Endothelial cell of umbilical vein (primary cell): ENCODE measurements at regions of chr14 and their contacts with region 1.

Region 1: GRCh38 chr14:84254290-84254689 is 1275.7 kb upstream of the FLRT2 start:
- DNase-seq: peak; percentile 96
- H3K4me3 ChIP-seq: peak overlapping the region in 1 of 3 experiments; percentile 32
- H3K27ac ChIP-seq: peak overlapping the region; percentile 87
- H3K4me1 ChIP-seq: peaks cover 55% of the 10 kb centered on the region
- H3K27me3 ChIP-seq: no peaks in the 10 kb centered on the region
- CTCF ChIP-seq: no peak
- POLR2A ChIP-seq: peak; percentile 58

Region 2: DNA sequence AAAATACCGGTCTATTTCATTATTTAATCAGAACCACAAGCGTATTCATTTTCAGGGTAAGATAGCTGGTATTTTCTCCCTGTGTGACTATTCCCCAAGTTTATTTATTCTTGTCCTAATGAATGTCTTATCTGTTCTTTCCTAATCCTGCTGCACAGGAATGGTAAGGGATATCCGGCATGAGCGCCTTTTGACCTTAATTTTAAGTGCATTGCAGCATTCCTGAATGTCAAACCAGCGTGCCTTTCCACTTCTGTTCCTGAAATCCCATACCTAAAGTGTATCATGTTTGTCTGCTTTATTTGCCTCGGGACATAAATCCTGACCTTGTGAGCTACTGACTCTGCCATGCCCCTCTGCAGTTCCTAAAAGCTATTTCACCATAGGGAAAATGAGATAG is 437.5 kb before region 1 on chr14:
- CTCF ChIA-PET with region 1: no interaction called
- POLR2A ChIA-PET with region 1: no interaction called
- dilution Hi-C with region 1: no loop called
- intact Hi-C with region 1: loop called (anchors 1 kb)
- DNase-seq: peak; percentile 87
- H3K4me3 ChIP-seq: peak overlapping the region in 1 of 3 experiments; percentile 35
- H3K27ac ChIP-seq: peak overlapping the region; percentile 37
- H3K4me1 ChIP-seq: peaks cover 21% of the 10 kb centered on the region
- H3K27me3 ChIP-seq: no peaks in the 10 kb centered on the region
- CTCF ChIP-seq: no peak
- POLR2A ChIP-seq: peak; percentile 57

Region 3: DNA sequence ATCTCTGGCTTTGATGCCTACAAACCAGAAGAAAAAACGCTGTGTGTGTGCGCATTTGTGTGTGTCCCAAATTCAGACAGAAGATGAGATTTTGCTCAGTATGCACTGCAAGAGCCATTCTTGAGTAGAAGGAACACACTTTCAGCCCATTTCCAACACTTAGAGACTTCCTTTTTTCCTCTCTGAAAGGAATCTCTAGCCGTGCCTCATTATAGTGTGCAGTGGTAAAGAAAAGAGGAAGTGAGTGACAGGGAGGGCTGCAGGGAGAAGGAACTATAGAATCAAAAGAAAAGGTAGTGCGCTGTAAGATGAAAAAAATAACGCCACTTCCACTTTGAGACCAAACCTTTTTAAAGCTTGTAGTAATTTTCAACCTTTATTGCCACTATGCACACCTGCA is 125.3 kb before region 1 on chr14:
- CTCF ChIA-PET with region 1: no interaction called
- POLR2A ChIA-PET with region 1: no interaction called
- dilution Hi-C with region 1: no loop called
- intact Hi-C with region 1: loop called (anchors 5 kb)
- DNase-seq: peak; percentile 31
- H3K4me3 ChIP-seq: no peak overlapping the region
- H3K27ac ChIP-seq: no peak overlapping the region
- H3K4me1 ChIP-seq: peaks cover 21% of the 10 kb centered on the region
- H3K27me3 ChIP-seq: no peaks in the 10 kb centered on the region
- CTCF ChIP-seq: no peak
- POLR2A ChIP-seq: no peak

Region 4: DNA sequence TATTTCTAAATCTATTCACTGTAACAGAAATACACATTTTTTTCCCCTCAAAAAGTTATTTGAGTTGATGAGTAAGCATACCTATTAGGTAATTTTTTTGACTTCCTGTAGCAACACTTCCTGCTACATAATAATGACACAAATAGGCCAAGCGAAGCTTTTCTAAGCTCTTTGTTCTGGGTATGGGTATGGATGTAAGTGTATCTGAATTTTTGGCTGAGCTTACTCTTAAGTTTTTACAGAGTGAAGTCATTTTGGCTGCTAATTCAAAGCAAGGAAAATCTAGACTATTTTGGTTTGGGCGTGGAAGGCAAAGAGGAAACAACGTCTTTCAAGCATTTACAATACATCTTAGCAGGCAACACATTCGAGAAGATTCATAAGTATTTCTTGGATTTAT is 69.7 kb after region 1 on chr14:
- CTCF ChIA-PET with region 1: no interaction called
- POLR2A ChIA-PET with region 1: interaction called, 3 read pairs
- dilution Hi-C with region 1: no loop called
- intact Hi-C with region 1: loop called (anchors 1 kb)
- DNase-seq: peak; percentile 57
- H3K4me3 ChIP-seq: no peak overlapping the region
- H3K27ac ChIP-seq: peak overlapping the region; percentile 64
- H3K4me1 ChIP-seq: peaks cover 16% of the 10 kb centered on the region
- H3K27me3 ChIP-seq: no peaks in the 10 kb centered on the region
- CTCF ChIP-seq: no peak
- POLR2A ChIP-seq: no peak

Region 5: GRCh38 chr14:84622357-84622756 is 368.1 kb after region 1 on chr14:
- CTCF ChIA-PET with region 1: no interaction called
- POLR2A ChIA-PET with region 1: no interaction called
- dilution Hi-C with region 1: no loop called
- intact Hi-C with region 1: loop called (anchors 5 kb)
- DNase-seq: peak; percentile 94
- H3K4me3 ChIP-seq: no peak overlapping the region
- H3K27ac ChIP-seq: no peak overlapping the region
- H3K4me1 ChIP-seq: peaks cover 16% of the 10 kb centered on the region
- H3K27me3 ChIP-seq: no peaks in the 10 kb centered on the region
- CTCF ChIP-seq: no peak
- POLR2A ChIP-seq: no peak

Region 6: DNA sequence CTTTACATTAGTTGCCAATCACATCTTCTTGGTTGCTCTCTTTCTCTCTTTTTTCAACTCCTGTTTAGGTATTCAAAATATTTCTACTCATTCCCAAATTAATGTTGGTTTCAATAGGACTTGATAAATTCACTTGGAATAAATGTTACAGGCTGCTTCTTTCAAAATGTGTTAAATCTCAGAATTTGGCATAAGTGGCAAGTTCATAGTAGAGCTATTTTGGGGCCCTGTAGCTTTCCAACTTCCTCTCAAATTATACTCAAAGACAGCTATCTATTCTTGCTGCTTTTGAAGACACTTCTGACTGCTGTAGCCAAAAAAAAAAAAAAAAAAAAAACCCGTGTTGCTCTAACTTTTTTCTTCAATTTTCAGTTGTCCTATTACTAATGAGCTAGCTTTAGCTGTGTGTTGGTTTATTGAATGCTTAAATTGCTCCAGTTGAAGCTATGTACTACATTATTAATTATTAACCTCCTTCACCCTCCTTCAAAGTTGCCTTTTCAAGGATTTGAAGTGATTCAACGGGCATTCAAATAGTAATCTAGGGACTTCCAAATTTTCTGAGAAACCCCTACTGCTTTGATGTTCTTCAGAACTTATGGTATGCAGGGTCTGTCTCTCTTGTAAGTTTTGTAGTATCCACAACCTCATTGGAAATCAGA is 721.1 kb after region 1 on chr14:
- CTCF ChIA-PET with region 1: no interaction called
- POLR2A ChIA-PET with region 1: no interaction called
- dilution Hi-C with region 1: no loop called
- intact Hi-C with region 1: loop called (anchors 5 kb)
- DNase-seq: no peak
- H3K4me3 ChIP-seq: no peak overlapping the region
- H3K27ac ChIP-seq: peak overlapping the region; percentile 50
- H3K4me1 ChIP-seq: peaks cover 12% of the 10 kb centered on the region
- H3K27me3 ChIP-seq: no peaks in the 10 kb centered on the region
- CTCF ChIP-seq: no peak
- POLR2A ChIP-seq: no peak

Region 7: GRCh38 chr14:85471727-85472126 is 1217.4 kb after region 1 on chr14:
- CTCF ChIA-PET with region 1: no interaction called
- POLR2A ChIA-PET with region 1: no interaction called
- dilution Hi-C with region 1: no loop called
- intact Hi-C with region 1: loop called (anchors 1 kb)
- DNase-seq: peak; percentile 100
- H3K4me3 ChIP-seq: no peak overlapping the region
- H3K27ac ChIP-seq: peak overlapping the region; percentile 97
- H3K4me1 ChIP-seq: peaks cover 54% of the 10 kb centered on the region
- H3K27me3 ChIP-seq: no peaks in the 10 kb centered on the region
- CTCF ChIP-seq: no peak
- POLR2A ChIP-seq: peak; percentile 86